ENCODE measurements at regions of chr5 and their contacts with region 1.

Region 1: DNA sequence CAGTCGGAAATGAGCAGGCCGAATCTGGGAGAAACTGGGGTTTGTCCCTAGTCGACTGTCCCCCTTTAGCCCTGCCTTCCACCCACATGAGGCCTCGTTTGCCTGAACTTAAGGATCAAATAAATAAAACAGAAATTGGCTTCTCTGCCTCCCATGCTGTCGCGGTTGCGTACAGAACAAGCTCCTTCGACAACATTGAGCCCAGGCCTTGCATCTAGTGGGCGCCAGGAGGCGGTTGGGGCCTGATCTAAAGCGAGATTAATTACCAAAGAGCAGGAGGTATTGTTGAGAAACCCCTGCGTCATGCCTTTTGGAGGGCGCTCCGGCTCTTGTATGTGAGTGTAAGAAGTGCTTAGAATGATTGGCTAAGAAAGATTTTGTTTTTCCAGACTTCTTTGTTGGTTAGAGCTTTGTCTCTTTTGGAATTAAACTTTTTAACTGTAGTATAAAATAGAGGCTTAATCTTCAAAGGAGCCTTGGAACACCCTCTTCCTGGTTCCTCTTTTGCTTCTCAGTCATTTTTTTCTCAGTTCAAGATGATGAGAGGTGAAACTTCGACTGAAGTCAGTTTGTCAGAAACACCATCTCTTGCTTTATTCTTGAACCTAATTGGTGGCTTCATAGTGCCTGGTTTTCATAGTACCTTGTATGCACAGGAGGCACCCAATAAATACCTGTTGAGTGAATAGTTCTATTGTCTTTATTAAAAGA is 827 bp downstream of the ATP6V0E1 start:
- DNase-seq: peak; percentile 79
- CTCF ChIP-seq: peak; percentile 75

Region 2: DNA sequence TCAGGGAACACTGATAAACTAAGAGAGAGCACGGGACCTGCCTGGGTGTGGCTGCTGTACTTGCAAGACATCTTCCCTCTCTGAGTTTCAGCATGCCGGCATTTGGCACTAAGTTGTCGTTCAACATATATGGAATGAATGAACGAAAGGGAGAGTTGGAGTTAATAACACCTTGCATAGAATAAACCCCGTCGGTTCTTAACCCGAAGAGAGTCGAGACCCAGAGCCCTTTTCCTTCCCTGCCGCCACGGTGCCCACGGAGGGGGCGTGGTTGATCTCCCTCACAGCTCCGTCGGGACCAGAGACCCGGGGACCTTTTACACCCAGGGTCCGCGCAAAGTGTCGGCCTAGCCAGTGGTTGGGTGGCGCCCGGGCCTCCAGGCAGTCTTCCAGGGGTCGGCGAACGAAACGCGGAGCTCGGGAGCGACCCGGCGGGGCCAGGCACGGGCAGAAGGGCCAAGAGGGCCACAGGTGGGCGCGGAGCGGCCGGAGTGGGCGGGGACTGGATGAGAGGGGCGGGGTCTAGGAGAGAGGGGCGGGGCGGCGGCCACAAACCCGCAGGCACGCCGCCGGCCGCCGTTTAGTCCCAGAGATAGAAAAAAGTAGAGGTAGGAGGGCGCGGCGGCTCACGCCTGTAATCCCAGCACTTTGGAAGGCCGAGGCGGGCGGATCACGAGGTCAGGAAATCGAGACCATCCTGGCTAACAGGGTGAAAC is 25.9 kb before region 1 on chr5:
- CTCF ChIA-PET with region 1: interaction called, 12 read pairs
- POLR2A ChIA-PET with region 1: interaction called, 7 read pairs
- DNase-seq: peak; percentile 93
- CTCF ChIP-seq: no peak

Region 3: GRCh38 chr5:172973127-172973916 is 11.1 kb before region 1 on chr5:
- CTCF ChIA-PET with region 1: interaction called, 19 read pairs
- POLR2A ChIA-PET with region 1: interaction called, 3 read pairs
- DNase-seq: no peak
- CTCF ChIP-seq: no peak

Region 4: GRCh38 chr5:172994405-172994804 is 10.0 kb after region 1 on chr5:
- CTCF ChIA-PET with region 1: interaction called, 12 read pairs
- POLR2A ChIA-PET with region 1: interaction called, 3 read pairs
- DNase-seq: no peak
- CTCF ChIP-seq: no peak

Region 5: GRCh38 chr5:173331956-173332479 is 347.6 kb after region 1 on chr5:
- CTCF ChIA-PET with region 1: interaction called, 10 read pairs
- POLR2A ChIA-PET with region 1: no interaction called
- DNase-seq: peak; percentile 90
- CTCF ChIP-seq: peak; percentile 86

Region 6: GRCh38 chr5:173689737-173690360 is 705.5 kb after region 1 on chr5:
- CTCF ChIA-PET with region 1: no interaction called
- POLR2A ChIA-PET with region 1: no interaction called
- DNase-seq: peak; percentile 59
- CTCF ChIP-seq: no peak

Measured in GM10248 (cell line).